Breast epithelium (tissue), 4 donors: ENCODE measurements at regions of chr4 and their contacts with region 1.

Region 1: DNA sequence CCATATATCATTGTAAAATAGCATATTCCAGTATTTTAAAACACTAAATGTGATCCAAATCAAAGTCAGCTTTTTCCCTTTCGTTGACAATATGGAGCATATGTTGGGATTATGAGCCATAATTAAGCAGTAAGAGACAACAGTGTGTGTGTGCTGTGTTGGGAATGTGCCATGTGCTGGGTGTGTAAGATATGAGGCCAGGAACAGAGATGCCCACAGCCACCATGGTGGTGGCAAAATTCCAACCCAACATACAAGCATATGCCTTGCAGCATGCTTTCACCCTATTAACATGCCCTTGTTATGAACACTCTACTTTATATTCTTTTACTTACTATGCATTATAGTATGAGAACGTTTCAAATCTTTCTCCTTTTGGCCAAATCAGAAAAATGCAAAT is 1560.4 kb upstream of the TENM3 start:
- DNase-seq: no peak
- H3K4me3 ChIP-seq: no peak overlapping the region
- H3K27ac ChIP-seq: no peak overlapping the region
- H3K4me1 ChIP-seq: no peaks in the 10 kb centered on the region
- H3K27me3 ChIP-seq: no peaks in the 10 kb centered on the region
- CTCF ChIP-seq: no peak
- POLR2A ChIP-seq: no peak

Region 2: DNA sequence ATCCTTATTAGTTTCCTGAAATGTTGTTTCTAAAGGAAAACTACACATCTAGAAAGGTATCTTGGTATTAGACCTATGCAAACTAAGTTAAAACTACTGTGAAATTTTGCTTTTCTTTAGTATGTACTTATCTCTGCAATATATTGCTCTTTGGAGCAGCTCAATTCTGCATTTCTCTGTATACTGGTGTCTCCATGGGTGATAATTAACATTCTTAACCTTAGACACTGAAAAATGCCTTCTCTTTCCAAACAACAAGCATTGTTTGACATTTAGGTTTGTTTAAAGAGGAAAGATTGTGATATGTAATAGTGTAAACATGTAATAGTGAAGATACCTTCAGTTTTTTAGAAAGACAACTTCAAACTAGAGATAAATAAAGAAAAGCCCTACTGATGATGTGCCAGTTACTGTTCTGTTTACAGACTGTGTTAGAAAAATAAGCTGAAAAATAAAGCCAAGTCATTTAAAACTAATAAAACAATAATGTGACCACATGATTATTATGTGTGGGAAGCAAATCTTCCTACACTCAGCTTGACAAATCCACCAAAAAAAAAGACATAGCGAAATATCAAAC is 474.9 kb before region 1 on chr4:
- intact Hi-C with region 1: no loop called
- DNase-seq: no peak
- H3K4me3 ChIP-seq: no peak overlapping the region
- H3K27ac ChIP-seq: no peak overlapping the region
- H3K4me1 ChIP-seq: no peaks in the 10 kb centered on the region
- H3K27me3 ChIP-seq: no peaks in the 10 kb centered on the region
- CTCF ChIP-seq: no peak
- POLR2A ChIP-seq: no peak

Region 3: DNA sequence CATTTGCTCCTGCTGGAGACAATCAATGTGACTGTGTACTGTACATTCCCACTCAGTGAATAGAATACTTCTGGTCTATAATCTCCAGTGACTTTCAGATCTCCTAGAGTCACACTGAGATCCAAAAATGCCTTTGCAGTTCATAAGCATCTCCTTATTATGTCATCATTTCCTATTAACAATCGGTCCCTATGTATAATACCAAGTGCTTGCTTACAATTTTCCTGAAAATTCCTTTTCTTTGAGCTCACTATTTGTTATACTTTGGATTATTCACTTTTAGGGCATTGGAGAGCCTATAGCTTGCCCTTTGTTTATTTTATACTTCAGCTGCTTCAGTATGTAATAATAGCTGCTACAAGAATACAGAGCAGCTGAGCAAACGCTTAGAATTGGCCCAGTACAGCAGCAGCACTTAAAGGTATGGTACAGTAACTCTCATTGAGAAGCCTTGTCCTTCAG is 1921.4 kb after region 1 on chr4:
- intact Hi-C with region 1: loop called (anchors 10 kb)
- DNase-seq: no peak
- H3K4me3 ChIP-seq: no peak overlapping the region
- H3K27ac ChIP-seq: no peak overlapping the region
- H3K4me1 ChIP-seq: no peaks in the 10 kb centered on the region
- H3K27me3 ChIP-seq: no peaks in the 10 kb centered on the region
- CTCF ChIP-seq: no peak
- POLR2A ChIP-seq: no peak